Left colon (tissue), 2 donors: ENCODE measurements at regions of chr19 and their contacts with region 1.

Region 1: GRCh38 chr19:11035441-11036377 is 53.6 kb upstream of the LDLR start:
- DNase-seq: peak; percentile 94 to 97
- ATAC-seq: peak; percentile 97

Region 2: DNA sequence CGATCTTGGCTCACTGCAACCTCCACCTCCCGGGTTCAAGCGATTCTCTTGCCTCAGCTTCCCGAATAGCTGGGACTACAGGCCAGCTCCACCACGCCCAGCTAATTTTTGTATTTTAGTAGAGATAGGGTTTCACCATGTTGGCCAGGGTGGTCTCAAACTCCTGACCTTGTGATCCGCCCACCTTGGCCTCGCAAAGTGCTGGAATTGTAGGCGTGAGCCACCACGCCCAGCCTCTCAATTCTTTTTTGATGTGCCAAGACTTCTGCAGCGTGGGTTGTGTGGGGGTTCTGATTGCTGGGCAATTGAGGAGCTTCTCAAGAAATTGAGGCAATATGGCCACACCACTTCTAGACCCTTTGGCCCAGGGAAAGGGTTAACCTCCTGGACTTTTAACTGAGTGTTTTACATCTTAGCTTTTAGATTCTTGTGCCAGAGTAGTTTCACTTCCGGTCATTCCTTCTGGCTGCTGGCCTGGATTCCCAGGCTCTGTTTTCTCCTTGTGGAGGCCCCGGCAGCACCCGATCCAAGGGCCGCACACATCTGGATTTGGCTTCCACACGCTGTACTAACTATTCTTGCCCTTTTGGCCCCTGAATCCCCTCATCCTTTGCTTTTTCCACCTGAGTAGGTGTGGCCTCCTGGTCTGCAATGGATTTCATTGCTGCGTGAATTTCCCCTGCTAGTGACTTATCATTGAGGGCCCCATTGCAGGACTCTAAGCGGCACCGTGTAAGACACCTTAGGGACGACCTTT is 60.2 kb before region 1 on chr19:
- intact Hi-C with region 1: no loop called
- DNase-seq: no peak
- ATAC-seq: peak; percentile 50

Region 3: DNA sequence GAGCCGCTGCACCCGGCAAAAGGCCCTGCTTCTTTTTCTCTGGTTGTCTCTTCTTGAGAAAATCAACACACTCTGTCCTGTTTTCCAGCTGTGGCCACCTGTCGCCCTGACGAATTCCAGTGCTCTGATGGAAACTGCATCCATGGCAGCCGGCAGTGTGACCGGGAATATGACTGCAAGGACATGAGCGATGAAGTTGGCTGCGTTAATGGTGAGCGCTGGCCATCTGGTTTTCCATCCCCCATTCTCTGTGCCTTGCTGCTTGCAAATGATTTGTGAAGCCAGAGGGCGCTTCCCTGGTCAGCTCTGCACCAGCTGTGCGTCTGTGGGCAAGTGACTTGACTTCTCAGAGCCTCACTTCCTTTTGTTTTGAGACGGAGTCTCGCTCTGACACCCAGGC is 70.8 kb after region 1 on chr19:
- intact Hi-C with region 1: loop called in 1 of 2 experiments (anchors 10 kb)
- DNase-seq: peak in 1 of 2 donors; percentile 32
- ATAC-seq: no peak

Region 4: GRCh38 chr19:11125994-11126685 is 90.4 kb after region 1 on chr19:
- intact Hi-C with region 1: loop called (anchors 5 to 10 kb)
- DNase-seq: peak; percentile 59 to 87
- ATAC-seq: peak; percentile 57

Region 5: GRCh38 chr19:11203194-11204075 is 167.7 kb after region 1 on chr19:
- intact Hi-C with region 1: loop called in 1 of 2 experiments (anchors 10 kb)
- DNase-seq: peak; percentile 66 to 83
- ATAC-seq: peak; percentile 47